ENCODE measurements at regions of chr15 and their contacts with region 1.

Region 1: DNA sequence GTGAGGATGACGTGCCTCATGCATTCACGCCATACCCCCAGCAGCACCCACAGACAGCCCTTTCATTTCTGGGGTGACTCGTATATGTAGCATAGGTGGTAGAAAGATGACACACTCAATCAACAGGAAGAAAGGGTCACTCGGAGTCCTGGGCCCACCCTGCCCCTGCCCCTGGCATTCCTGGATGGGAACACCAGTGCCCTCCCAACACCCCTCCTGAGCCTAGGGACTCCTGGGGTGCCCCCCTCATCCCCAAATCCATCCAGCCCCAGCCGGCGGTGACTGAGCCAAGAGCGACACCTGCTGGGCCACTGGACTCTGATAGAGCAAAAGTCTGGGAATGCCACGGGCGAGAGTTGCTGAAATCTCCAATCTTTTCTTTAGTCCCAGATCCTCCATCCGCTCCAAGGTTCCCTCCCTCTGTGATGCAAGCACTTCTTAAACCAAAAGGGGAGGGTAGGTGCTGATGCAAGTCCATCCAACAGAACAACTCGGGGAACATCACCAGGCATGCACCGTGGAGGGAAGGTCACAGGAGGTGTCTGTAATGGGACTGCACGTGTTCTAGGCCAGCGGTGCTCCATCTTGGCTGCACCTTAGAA is 31.1 kb downstream of the ACAN start:
- DNase-seq: no peak
- ATAC-seq: peak; percentile 81
- H3K4me3 ChIP-seq: no peak overlapping the region
- H3K27ac ChIP-seq: no peak overlapping the region
- H3K4me1 ChIP-seq: no peaks in the 10 kb centered on the region
- H3K27me3 ChIP-seq: no peaks in the 10 kb centered on the region; a peak in 1 of 4 replicates
- CTCF ChIP-seq: peak; percentile 37 to 53 (median 51)
- EP300 ChIP-seq: no peak
- POLR2A ChIP-seq: no peak
- RAD21 ChIP-seq: peak; percentile 61

Region 2: GRCh38 chr15:88476635-88477060 is 357.7 kb before region 1 on chr15:
- CTCF ChIA-PET with region 1: interaction called, 4 read pairs
- POLR2A ChIA-PET with region 1: no interaction called
- RAD21 ChIA-PET with region 1: no interaction called
- SMC1A ChIA-PET with region 1: no interaction called
- in situ Hi-C with region 1: no loop called
- intact Hi-C with region 1: loop called (anchors 2 kb)
- DNase-seq: no peak
- ATAC-seq: peak; percentile 65
- H3K4me3 ChIP-seq: no peak overlapping the region
- H3K27ac ChIP-seq: no peak overlapping the region
- H3K4me1 ChIP-seq: peaks cover 4% of the 10 kb centered on the region
- H3K27me3 ChIP-seq: no peaks in the 10 kb centered on the region
- CTCF ChIP-seq: peak; percentile 47 to 71 (median 60); a peak in 5 of 6 replicates
- EP300 ChIP-seq: no peak
- POLR2A ChIP-seq: no peak
- RAD21 ChIP-seq: peak; percentile 78

Region 3: GRCh38 chr15:88818920-88819319 is 15.4 kb before region 1 on chr15:
- CTCF ChIA-PET with region 1: no interaction called
- POLR2A ChIA-PET with region 1: no interaction called
- RAD21 ChIA-PET with region 1: no interaction called
- SMC1A ChIA-PET with region 1: no interaction called
- in situ Hi-C with region 1: no loop called
- intact Hi-C with region 1: no loop called
- DNase-seq: no peak
- ATAC-seq: no peak
- H3K4me3 ChIP-seq: no peak overlapping the region
- H3K27ac ChIP-seq: no peak overlapping the region
- H3K4me1 ChIP-seq: no peaks in the 10 kb centered on the region
- H3K27me3 ChIP-seq: 0 out of 4 replicates have a peak, but pooled peaks cover 0 to 2% of the 10 kb centered on the region in 2 experiments
- CTCF ChIP-seq: no peak
- EP300 ChIP-seq: no peak
- POLR2A ChIP-seq: no peak
- RAD21 ChIP-seq: no peak

Region 4: DNA sequence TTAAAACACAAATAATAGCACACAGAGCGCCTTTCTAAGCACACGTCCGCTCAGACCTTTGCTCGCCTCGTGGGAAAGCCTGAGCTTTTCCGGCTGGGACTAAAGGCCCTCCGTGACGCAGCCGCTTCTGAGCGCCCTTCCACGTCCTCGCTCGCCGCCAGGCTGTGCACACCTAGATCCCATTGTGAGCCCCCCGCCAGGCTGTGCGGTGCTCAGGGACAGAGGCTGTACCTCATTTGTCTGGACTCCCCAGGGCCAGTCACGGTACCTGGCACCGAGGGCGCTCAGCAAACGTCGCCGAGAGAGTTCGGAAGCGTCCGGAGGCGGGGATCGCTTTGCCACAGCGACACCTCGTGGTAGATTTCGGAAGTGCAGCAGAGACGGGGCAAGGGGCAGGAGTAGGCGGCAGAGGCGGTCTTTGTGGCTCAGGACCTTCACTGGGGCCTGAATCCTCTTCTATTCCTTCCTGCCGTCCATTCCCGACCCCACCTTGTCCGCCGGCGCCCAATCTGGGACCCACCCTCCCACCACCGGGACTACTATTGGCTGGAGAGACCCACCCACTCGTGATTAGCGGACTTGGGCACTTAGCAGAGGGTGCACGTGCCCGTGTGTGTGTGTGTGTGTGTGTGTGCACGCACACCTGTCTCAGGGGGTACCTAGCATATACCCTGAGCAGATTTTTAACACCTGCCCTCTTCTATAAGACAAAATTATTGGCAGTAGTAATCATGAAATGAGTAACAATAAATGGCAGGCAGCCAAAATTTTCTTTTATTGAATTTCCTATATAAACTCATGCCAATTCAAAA is 596.4 kb after region 1 on chr15:
- CTCF ChIA-PET with region 1: no interaction called
- POLR2A ChIA-PET with region 1: no interaction called
- RAD21 ChIA-PET with region 1: no interaction called
- SMC1A ChIA-PET with region 1: no interaction called
- in situ Hi-C with region 1: no loop called
- intact Hi-C with region 1: no loop called
- DNase-seq: peak; percentile 31
- ATAC-seq: peak; percentile 99
- H3K4me3 ChIP-seq: peak overlapping the region; percentile 69
- H3K27ac ChIP-seq: no peak overlapping the region
- H3K4me1 ChIP-seq: peaks cover 2% of the 10 kb centered on the region; the same call in 1 of the 2 replicates
- H3K27me3 ChIP-seq: no peaks in the 10 kb centered on the region
- CTCF ChIP-seq: peak; percentile 93 to 94 (median 94); a peak in 5 of 6 replicates
- EP300 ChIP-seq: no peak
- POLR2A ChIP-seq: peak; percentile 42; the same call in 1 of the 2 replicates
- RAD21 ChIP-seq: peak; percentile 73

Measured in GM12878 (cell line).